Ascending aorta (tissue), 2 donors: ENCODE measurements at regions of chr12 and their contacts with region 1.

Region 1: GRCh38 chr12:98561846-98562245 is 31.6 kb upstream of the SLC25A3 start:
- DNase-seq: no peak
- H3K4me3 ChIP-seq: no peak overlapping the region
- H3K27ac ChIP-seq: no peak overlapping the region
- H3K4me1 ChIP-seq: no peaks in the 10 kb centered on the region
- H3K27me3 ChIP-seq: no peaks in the 10 kb centered on the region
- CTCF ChIP-seq: no peak

Region 2: GRCh38 chr12:98653866-98654493 is 92.1 kb after region 1 on chr12:
- intact Hi-C with region 1: loop called (anchors 1 kb)
- DNase-seq: no peak
- H3K4me3 ChIP-seq: no peak overlapping the region
- H3K27ac ChIP-seq: no peak overlapping the region
- H3K4me1 ChIP-seq: no peaks in the 10 kb centered on the region
- H3K27me3 ChIP-seq: no peaks in the 10 kb centered on the region
- CTCF ChIP-seq: peak; percentile 30 to 58 (median 36)